RWPE1 (cell line): ENCODE measurements at regions of chr3 and their contacts with region 1.

Region 1: DNA sequence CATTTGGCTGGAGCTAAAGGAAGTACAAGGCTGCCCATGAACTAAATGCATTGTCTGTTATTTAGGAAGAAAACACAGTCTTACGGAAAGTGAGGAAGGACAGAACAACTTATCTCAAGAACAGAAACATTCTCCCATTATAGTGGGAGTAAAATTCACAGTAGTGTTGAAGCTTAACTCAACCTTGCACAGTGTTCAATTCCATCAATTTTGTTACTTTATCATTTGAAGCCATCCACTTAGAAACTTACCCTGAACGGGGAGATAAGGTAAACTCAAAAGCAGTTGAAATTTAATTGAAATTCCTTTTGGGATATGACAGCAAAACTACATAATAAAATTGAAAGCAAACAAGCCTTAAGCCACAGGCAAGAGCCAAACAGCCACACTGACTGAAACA is 186.9 kb downstream of the PCCB start:
- DNase-seq: no peak
- H3K27ac ChIP-seq: no peak overlapping the region
- CTCF ChIP-seq: no peak

Region 2: DNA sequence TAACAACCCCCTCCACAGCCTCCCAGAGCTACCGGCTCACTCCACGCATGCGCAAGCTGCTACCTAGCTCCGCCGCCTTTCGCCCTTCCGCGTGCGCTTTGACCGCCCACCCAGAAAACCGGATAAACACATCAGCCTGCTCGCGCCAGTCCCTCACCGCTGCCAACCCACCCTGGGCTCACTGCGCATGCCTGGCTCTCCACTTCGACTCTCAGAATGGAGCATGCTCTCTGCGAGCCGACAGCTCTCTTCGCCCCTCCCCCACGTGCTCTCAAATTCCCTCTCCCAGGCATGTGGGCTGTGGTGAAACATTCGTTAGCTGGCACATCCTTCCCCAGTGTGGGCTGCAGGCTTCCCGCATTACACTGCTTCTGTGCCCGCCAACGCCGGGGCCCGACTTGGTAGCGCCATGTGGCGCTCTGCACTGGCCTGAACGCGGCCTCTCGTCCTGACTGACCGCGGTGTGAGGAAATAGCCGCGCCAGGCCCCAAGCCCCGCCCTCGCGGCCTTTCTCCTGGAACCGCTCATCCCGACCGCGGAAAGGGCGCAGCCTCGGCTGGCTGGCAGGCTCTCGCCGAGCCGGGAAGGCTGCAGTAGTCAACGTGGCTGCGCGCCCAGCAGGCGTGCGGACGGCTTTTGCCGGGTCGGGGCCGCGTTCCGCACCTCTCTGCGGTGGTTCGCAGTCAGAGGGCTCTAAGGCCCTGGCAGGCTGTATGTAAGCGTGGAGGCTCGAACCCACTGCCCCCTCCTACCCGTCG is 240.5 kb before region 1 on chr3:
- CTCF ChIA-PET with region 1: interaction called, 4 read pairs
- POLR2A ChIA-PET with region 1: interaction called, 14 read pairs
- DNase-seq: peak; percentile 99
- H3K27ac ChIP-seq: peak overlapping the region; percentile 100
- CTCF ChIP-seq: no peak

Region 3: GRCh38 chr3:136456196-136456595 is 19.2 kb after region 1 on chr3:
- CTCF ChIA-PET with region 1: no interaction called
- POLR2A ChIA-PET with region 1: no interaction called
- DNase-seq: no peak
- H3K27ac ChIP-seq: no peak overlapping the region
- CTCF ChIP-seq: no peak